Cardiac septum (tissue), 1 donor: ENCODE measurements at regions of chr5 and their contacts with region 1.

Region 1: DNA sequence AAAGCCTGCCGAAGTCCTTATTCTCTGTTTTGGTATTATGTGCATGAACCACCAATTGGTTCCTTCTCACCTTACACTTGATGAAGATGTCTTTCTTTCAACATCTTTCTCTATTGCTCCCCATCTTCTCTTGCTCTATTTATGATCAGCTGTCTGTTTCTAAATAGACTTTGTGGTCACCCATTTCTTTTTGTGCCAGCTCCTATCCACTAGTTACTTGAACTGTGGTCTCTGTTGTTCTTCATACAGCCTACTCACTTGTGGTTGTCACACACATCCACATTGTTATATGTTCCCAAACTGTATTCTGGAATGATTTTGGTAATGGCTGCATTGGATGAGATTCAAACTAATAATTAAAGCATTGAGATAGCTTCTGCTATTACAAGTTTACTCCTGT is 11.4 kb downstream of the VCAN start:
- DNase-seq: no peak

Region 2: DNA sequence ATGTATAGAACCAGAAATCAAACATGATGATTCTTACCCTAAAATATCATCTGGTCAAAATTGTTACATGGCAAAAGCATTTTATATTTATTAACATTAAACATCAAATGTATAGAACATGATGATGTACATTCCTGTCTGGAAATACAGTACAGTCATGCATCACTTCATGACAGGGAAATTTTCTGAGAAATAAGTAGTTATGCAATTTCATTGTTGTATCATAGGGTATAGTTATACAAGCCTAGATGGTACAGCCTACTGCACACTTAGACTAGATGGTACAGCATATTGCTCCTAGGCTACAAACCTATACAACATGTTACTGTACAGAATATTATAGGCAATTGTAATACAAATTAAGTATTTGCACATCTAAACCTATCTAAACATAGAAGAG is 76.1 kb before region 1 on chr5:
- intact Hi-C with region 1: no loop called
- DNase-seq: no peak

Region 3: GRCh38 chr5:83553000-83553486 is 70.1 kb after region 1 on chr5:
- intact Hi-C with region 1: loop called (anchors 5 kb)
- DNase-seq: no peak

Region 4: DNA sequence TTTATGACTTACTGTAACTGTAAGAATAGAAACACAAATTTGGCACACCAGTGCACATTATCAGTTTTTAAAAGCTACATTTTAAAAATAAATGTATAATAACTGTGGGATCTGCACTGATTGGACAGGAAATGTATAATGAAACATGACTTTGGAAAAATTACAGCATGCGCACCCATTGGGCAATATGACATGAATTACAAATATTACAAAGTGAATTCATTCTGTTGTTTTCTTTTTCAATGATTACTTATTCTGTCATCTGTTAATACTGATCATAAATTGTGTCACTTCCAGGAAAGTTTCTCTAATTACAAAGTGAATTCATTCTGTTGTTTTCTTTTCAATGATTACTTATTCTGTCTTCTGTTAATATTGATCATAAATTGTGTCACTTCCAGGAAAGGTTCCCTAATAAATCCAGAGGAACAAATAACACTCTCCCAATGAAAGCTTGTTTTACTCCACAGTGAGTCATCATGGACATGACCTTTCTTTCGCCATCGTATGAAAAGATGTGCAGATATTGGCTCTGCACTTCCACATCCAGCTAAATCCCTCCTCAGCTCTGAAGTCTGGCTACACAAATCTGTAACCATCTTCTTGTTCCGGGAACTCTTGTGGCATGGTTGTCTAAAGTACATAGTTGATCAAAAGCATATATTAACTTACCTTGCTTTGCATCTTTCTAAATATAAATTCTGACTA is 534.7 kb after region 1 on chr5:
- intact Hi-C with region 1: no loop called
- DNase-seq: no peak

Region 5: GRCh38 chr5:84764227-84764626 is 1281.3 kb after region 1 on chr5:
- intact Hi-C with region 1: no loop called
- DNase-seq: no peak